Activated CD4-positive, alpha-beta T cell treated with anti-CD3 and anti-CD28 coated beads for 36 hours (primary cell): ENCODE measurements at regions of chr18 and their contacts with region 1.

Region 1: GRCh38 chr18:5073026-5073944 is 123.8 kb downstream of the AKAIN1 start:
- DNase-seq: peak; percentile 46
- ATAC-seq: peak; percentile 76
- H3K4me3 Mint-ChIP-seq: no peak overlapping the region
- H3K27ac Mint-ChIP-seq: no peak overlapping the region
- H3K4me1 Mint-ChIP-seq: peaks cover 3% of the 10 kb centered on the region
- H3K27me3 Mint-ChIP-seq: peaks cover under 1% of the 10 kb centered on the region

Region 2: GRCh38 chr18:4524096-4524495 is 549.2 kb before region 1 on chr18:
- CTCF ChIA-PET with region 1: no interaction called
- POLR2A ChIA-PET with region 1: no interaction called
- intact Hi-C with region 1: no loop called
- DNase-seq: no peak
- ATAC-seq: no peak
- H3K4me3 Mint-ChIP-seq: no peak overlapping the region
- H3K27ac Mint-ChIP-seq: no peak overlapping the region
- H3K4me1 Mint-ChIP-seq: no peaks in the 10 kb centered on the region
- H3K27me3 Mint-ChIP-seq: no peaks in the 10 kb centered on the region

Region 3: DNA sequence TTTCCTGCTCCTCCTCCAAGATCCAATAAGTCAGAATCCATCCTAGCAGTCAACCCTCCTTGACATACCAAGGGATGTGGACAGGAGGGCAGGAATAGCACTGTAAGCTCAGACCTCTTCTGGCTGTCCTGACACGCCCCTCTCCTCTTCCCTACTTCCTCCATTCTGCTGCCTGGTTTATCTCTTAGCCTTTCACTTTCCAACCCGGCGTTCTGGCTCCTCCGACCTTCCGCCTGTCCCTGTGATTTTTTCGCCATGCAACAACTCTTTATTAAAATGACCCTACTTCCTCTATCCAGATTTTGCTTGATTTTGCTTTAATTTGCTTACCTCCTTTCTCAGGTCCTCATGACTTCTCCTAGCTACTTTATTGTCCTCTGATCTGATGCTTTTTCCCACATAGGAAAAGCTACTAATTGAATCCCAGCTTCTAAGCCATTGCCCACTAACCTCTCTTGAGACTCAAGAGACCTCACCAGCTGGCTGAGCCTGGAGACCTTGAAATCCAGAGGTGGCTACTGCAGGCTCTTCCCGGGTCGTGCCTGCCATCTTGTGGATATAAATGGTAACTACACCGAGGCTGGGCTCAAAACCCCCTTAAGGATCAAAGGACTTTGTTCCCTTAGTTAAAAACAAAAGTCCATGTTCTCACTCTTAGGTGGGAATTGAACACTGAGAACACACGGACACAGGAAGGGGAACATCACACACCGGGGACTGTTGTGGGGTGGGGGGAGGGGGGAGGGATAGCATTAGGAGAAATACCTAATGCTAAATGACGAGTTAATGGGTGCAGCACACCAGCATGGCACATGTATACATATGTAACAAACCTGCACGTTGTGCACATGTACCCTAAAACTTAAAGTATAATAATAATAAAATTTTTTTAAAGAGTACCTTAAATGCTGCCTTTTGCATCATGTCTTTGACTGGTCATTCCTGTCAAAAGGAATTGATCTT is 15.6 kb before region 1 on chr18:
- CTCF ChIA-PET with region 1: interaction called, 14 read pairs
- POLR2A ChIA-PET with region 1: no interaction called
- intact Hi-C with region 1: no loop called
- DNase-seq: peak; percentile 74
- ATAC-seq: peak; percentile 74
- H3K4me3 Mint-ChIP-seq: no peak overlapping the region
- H3K27ac Mint-ChIP-seq: no peak overlapping the region
- H3K4me1 Mint-ChIP-seq: peaks cover 18% of the 10 kb centered on the region
- H3K27me3 Mint-ChIP-seq: peaks cover 2% of the 10 kb centered on the region

Region 4: GRCh38 chr18:5106730-5107129 is 33.4 kb after region 1 on chr18:
- CTCF ChIA-PET with region 1: interaction called, 6 read pairs
- POLR2A ChIA-PET with region 1: no interaction called
- intact Hi-C with region 1: loop called in 1 of 2 experiments (anchors 1 kb)
- DNase-seq: no peak
- ATAC-seq: peak; percentile 84
- H3K4me3 Mint-ChIP-seq: no peak overlapping the region
- H3K27ac Mint-ChIP-seq: no peak overlapping the region
- H3K4me1 Mint-ChIP-seq: peaks cover 6% of the 10 kb centered on the region
- H3K27me3 Mint-ChIP-seq: no peaks in the 10 kb centered on the region

Region 5: DNA sequence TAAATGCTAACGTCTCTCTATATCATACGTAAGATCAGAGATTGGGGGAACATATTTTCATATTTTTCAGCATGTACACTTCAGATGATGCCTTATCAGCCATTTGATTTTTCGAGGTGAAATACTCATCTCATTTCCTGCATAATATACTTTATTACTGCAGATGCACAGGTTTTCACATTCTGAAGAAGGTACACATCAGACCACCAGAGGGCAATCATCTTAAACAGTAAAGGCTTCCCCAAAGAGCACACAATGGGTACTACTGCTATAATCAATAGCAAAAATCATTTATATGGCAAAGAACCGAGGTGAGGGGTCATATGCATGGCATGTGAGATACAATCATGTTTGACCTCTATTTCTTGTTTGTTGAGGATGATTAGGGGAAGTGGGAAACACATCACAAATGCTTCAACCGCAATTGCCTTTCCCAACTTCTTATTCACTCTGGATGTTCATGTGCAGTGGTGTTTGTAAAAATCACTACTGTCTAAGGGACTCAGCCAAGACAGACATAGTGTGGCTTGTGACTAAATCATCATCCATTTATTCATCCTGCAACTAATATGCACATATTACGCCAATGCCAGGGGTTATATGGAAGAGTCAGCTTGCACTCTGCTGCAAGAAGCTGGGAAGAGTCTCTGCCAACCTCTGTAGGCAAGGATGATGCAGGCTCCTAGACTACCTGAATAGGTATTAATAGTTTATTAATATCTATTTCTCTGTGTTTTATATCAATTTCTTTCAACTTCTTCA is 351.8 kb after region 1 on chr18:
- CTCF ChIA-PET with region 1: no interaction called
- POLR2A ChIA-PET with region 1: no interaction called
- intact Hi-C with region 1: loop called in 1 of 2 experiments (anchors 5 kb)
- DNase-seq: no peak
- ATAC-seq: peak; percentile 49
- H3K4me3 Mint-ChIP-seq: no peak overlapping the region
- H3K27ac Mint-ChIP-seq: no peak overlapping the region
- H3K4me1 Mint-ChIP-seq: peaks cover 4% of the 10 kb centered on the region
- H3K27me3 Mint-ChIP-seq: peaks cover 2% of the 10 kb centered on the region

Region 6: DNA sequence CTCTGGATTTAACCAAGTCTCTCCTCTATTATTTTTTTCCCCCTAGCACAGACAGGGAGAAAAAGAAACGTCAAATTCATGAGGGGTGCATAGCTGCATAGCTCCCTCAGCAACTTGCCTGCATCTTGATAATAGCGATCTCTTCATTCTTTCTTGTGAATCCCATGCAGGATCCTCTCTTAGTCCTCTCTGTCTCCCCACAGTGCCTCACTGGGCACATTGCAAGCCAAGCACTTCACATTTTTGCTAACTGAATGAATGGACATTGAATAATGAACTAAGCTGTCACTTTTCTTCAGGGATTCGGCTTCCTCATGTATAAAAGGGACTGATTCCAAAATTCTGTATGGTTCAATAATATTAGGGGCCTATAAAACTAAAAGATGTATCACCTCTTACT is 473.4 kb after region 1 on chr18:
- CTCF ChIA-PET with region 1: interaction called, 4 read pairs
- POLR2A ChIA-PET with region 1: no interaction called
- intact Hi-C with region 1: loop called in 1 of 2 experiments (anchors 5 kb)
- DNase-seq: peak; percentile 20
- ATAC-seq: peak; percentile 50
- H3K4me3 Mint-ChIP-seq: no peak overlapping the region
- H3K27ac Mint-ChIP-seq: no peak overlapping the region
- H3K4me1 Mint-ChIP-seq: peaks cover 3% of the 10 kb centered on the region
- H3K27me3 Mint-ChIP-seq: peaks cover 27% of the 10 kb centered on the region

Region 7: DNA sequence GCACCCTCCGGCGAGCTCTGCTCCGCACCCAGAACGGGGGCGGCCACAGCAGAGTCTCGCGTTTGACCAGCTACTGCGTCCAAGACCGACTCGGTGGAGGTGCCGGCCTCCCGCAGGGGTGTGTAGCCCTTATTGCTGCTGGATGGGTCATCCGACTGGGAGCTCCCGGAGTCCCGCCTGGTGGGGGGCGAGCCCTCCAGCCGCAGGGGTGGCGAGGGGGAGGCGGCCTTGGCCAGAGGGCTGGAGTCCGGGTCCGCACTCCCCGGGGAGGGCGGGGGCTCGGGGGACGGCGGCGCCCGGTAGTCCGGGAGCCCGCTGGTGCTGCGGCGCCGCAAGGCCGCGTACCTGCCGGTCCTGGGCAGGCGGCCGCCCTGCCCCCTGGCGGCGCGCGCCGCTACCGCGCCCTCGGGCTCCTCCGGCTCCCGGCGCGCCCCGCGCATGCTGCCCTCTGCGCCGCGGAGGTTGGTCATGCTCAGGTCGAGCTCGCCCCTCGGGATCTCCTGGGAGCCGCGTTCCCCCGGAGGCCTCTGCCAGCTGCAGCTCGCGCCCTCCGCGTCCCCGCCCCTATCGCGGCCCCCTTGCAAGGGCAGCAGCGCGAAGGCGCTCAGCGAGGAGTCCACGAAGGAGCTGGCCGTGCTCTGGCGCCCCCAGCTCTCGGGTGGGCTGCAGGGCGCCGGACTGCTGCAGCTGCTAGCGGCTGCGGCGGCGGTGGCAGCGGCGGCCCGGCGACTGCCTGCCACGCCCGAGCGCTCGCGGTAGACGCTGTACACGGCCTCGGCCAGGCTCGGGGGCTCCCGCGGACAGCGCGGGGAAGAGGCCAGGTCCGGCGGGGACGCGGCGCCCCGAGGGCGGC is 817.3 kb after region 1 on chr18:
- CTCF ChIA-PET with region 1: no interaction called
- POLR2A ChIA-PET with region 1: no interaction called
- intact Hi-C with region 1: loop called in 1 of 2 experiments (anchors 2 kb)
- DNase-seq: peak; percentile 66
- ATAC-seq: peak; percentile 92
- H3K4me3 Mint-ChIP-seq: no peak overlapping the region
- H3K27ac Mint-ChIP-seq: no peak overlapping the region
- H3K4me1 Mint-ChIP-seq: peaks cover 9% of the 10 kb centered on the region
- H3K27me3 Mint-ChIP-seq: peaks cover 46% of the 10 kb centered on the region

Region 8: GRCh38 chr18:6885992-6886796 is 1812.9 kb after region 1 on chr18:
- CTCF ChIA-PET with region 1: no interaction called
- POLR2A ChIA-PET with region 1: no interaction called
- intact Hi-C with region 1: loop called in 1 of 2 experiments (anchors 10 kb)
- DNase-seq: peak; percentile 34
- ATAC-seq: no peak
- H3K4me3 Mint-ChIP-seq: no peak overlapping the region
- H3K27ac Mint-ChIP-seq: no peak overlapping the region
- H3K4me1 Mint-ChIP-seq: no peaks in the 10 kb centered on the region
- H3K27me3 Mint-ChIP-seq: peaks cover 2% of the 10 kb centered on the region